Endothelial cell of umbilical vein (primary cell): ENCODE measurements at regions of chr11 and their contacts with region 1.

Region 1: GRCh38 chr11:75204685-75205563 is 35.6 kb upstream of the TPBGL start:
- DNase-seq: peak; percentile 72
- H3K4me3 ChIP-seq: no peak overlapping the region
- H3K27ac ChIP-seq: no peak overlapping the region
- H3K4me1 ChIP-seq: no peaks in the 10 kb centered on the region
- H3K27me3 ChIP-seq: peaks cover 16% of the 10 kb centered on the region in 2 experiments
- CTCF ChIP-seq: peak; percentile 82 to 97
- POLR2A ChIP-seq: no peak

Region 2: GRCh38 chr11:74097686-74098237 is 1107.2 kb before region 1 on chr11:
- CTCF ChIA-PET with region 1: no interaction called
- POLR2A ChIA-PET with region 1: no interaction called
- dilution Hi-C with region 1: no loop called
- intact Hi-C with region 1: no loop called
- DNase-seq: no peak
- H3K4me3 ChIP-seq: no peak overlapping the region
- H3K27ac ChIP-seq: no peak overlapping the region
- H3K4me1 ChIP-seq: no peaks in the 10 kb centered on the region
- H3K27me3 ChIP-seq: no peaks in the 10 kb centered on the region
- CTCF ChIP-seq: no peak
- POLR2A ChIP-seq: no peak

Region 3: DNA sequence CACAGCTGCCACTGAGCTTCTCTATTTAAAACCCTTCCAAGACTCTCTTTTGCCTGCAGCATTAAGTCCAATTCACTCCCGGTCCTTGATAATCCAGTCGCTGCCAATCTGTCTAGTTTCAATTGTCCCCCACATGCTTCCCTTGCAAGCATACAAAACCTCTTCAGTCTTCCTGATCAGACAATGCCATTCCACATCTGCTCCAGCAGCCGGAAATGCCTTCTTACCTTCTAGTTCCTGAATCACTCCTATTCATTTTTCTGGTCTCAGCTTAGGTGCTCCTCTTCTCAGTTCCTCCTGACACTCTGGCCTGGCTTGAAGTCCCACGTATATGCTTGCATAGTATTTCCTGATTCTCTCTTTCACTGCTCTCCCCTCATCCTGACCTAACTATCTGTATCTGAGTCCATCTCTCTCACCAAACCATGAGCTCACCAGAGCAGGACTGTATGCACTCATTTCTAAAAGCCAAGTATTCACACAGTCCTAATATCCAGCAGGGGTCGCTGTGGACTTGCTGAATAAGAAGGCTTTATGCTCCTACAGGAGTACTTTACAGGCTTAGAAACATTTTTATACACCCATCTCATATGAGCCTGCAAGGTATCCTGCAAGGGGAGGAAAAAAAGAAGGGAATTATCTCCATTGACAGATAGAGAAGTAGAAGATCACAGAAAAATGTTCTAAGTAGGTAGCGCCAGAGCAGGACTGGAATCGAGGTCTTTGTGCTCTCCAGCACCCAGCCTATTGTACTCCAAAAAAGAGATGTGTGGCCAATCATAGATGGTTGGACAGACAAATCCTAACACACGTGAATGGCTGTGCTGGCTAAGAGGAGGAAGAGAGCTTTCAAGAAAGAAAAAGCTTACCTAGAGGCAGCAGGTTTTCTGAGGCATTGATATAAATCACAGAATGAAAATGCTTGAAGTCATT is 275.2 kb before region 1 on chr11:
- CTCF ChIA-PET with region 1: interaction called, 106 read pairs
- POLR2A ChIA-PET with region 1: no interaction called
- dilution Hi-C with region 1: no loop called
- intact Hi-C with region 1: loop called (anchors 1 kb)
- DNase-seq: peak; percentile 84
- H3K4me3 ChIP-seq: no peak overlapping the region
- H3K27ac ChIP-seq: peak overlapping the region; percentile 23
- H3K4me1 ChIP-seq: peaks cover 25% of the 10 kb centered on the region
- H3K27me3 ChIP-seq: no peaks in the 10 kb centered on the region
- CTCF ChIP-seq: peak; percentile 70 to 78
- POLR2A ChIP-seq: no peak

Region 4: GRCh38 chr11:75031771-75032549 is 173.0 kb before region 1 on chr11:
- CTCF ChIA-PET with region 1: interaction called, 12 read pairs
- POLR2A ChIA-PET with region 1: no interaction called
- dilution Hi-C with region 1: no loop called
- intact Hi-C with region 1: no loop called
- DNase-seq: peak; percentile 70
- H3K4me3 ChIP-seq: no peak overlapping the region
- H3K27ac ChIP-seq: no peak overlapping the region
- H3K4me1 ChIP-seq: peaks cover 8% of the 10 kb centered on the region
- H3K27me3 ChIP-seq: peaks cover 0 to 7% of the 10 kb centered on the region in 2 experiments
- CTCF ChIP-seq: peak; percentile 85
- POLR2A ChIP-seq: no peak

Region 5: GRCh38 chr11:75160192-75160757 is 44.6 kb before region 1 on chr11:
- CTCF ChIA-PET with region 1: interaction called, 22 read pairs
- POLR2A ChIA-PET with region 1: no interaction called
- dilution Hi-C with region 1: no loop called
- intact Hi-C with region 1: loop called (anchors 1 kb)
- DNase-seq: peak; percentile 20
- H3K4me3 ChIP-seq: no peak overlapping the region
- H3K27ac ChIP-seq: no peak overlapping the region
- H3K4me1 ChIP-seq: peaks cover 11% of the 10 kb centered on the region
- H3K27me3 ChIP-seq: peaks cover 0 to 2% of the 10 kb centered on the region in 2 experiments
- CTCF ChIP-seq: no peak
- POLR2A ChIP-seq: no peak

Region 6: DNA sequence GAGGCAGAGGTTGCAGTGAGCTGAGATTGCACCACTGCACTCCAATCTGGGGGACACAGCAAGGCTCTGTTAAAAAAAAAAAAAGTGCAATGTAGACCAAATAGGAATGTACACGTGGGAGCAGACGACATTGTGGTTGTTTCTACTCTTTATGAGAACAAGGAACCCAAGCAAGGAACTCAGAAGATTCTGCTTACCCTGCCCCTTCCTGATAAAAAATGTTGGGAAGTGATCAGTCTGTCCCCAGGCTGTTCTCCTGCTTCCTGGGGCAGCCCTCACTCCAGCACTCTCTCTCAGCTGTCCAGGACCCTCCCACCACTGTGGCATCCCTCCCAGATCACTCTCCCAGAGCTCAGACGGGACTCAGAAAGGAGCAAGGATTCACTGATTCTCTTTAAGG is 22.3 kb before region 1 on chr11:
- CTCF ChIA-PET with region 1: interaction called, 125 read pairs
- POLR2A ChIA-PET with region 1: no interaction called
- dilution Hi-C with region 1: no loop called
- intact Hi-C with region 1: no loop called
- DNase-seq: no peak
- H3K4me3 ChIP-seq: no peak overlapping the region
- H3K27ac ChIP-seq: no peak overlapping the region
- H3K4me1 ChIP-seq: no peaks in the 10 kb centered on the region
- H3K27me3 ChIP-seq: peaks cover 11 to 14% of the 10 kb centered on the region in 2 experiments
- CTCF ChIP-seq: no peak
- POLR2A ChIP-seq: no peak

Region 7: DNA sequence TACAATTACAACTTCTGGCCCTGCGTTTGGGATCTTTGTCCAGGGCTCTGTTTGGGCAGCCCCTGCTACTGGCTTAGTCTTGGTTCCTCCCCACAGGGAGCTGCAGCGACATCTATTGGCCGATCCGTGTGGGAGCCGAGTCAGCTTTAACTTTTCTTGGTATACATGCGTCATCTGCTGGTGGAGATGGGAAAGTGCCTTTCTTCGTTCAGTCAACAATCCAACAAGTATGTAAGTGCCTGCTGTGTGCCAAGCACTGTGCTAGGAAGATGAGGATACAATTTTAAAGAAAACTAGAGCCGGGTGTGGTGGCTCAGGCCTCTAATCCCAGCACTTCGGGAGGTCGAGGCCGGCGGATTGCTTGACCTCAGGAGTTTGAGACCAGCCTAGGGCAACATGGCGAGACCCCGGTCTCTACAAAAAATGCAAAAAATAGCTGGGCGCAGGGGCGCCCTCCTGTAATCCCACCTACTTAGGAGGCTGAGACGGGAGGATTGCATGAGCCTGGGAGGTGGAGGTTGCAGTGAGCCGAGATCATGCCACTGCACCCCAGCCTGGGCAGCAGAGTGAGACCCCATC is 43.9 kb after region 1 on chr11:
- CTCF ChIA-PET with region 1: interaction called, 57 read pairs
- POLR2A ChIA-PET with region 1: no interaction called
- dilution Hi-C with region 1: no loop called
- intact Hi-C with region 1: loop called (anchors 1 kb)
- DNase-seq: peak; percentile 88
- H3K4me3 ChIP-seq: no peak overlapping the region
- H3K27ac ChIP-seq: no peak overlapping the region
- H3K4me1 ChIP-seq: no peaks in the 10 kb centered on the region
- H3K27me3 ChIP-seq: peaks cover 19 to 28% of the 10 kb centered on the region in 2 experiments
- CTCF ChIP-seq: peak; percentile 99 to 100
- POLR2A ChIP-seq: no peak